IMR-90 (cell line): ENCODE measurements at regions of chr17 and their contacts with region 1.

Region 1: DNA sequence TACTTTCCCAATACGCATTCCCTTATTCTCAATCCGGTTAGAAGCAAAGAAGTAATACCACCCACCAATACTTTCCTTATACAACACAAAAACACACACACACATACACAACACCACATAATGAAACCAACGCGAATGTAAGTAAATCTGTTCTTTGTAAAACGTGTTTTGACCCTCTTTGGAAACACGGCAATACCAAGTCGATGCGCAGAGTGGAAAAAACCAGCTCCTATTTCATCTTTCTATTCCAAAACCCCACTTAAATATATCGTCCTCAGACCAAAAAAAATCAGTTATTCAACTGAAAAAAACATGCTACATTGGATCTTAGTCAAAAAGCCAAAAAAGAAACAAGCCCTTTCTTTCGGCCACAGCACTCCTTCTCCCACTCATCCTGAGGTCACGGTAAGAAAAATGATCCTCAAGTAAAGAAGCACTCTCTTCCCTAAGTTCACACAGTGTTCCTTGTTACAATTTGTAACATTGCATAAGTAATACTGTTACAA is 31.0 kb upstream of the ARL4D start:
- DNase-seq: peak; percentile 97
- ATAC-seq: peak; percentile 59
- H3K4me3 ChIP-seq: peak overlapping the region; percentile 35; the same call in 1 of the 2 replicates
- H3K27ac ChIP-seq: peak overlapping the region; percentile 79
- H3K4me1 ChIP-seq: peaks cover 14% of the 10 kb centered on the region
- H3K27me3 ChIP-seq: no peaks in the 10 kb centered on the region
- CTCF ChIP-seq: no peak
- POLR2A ChIP-seq: peak; percentile 100
- RAD21 ChIP-seq: no peak

Region 2: GRCh38 chr17:43388359-43389045 is 20.7 kb after region 1 on chr17:
- CTCF ChIA-PET with region 1: no interaction called
- POLR2A ChIA-PET with region 1: interaction called, 34 read pairs
- dilution Hi-C with region 1: no loop called
- in situ Hi-C with region 1: no loop called
- intact Hi-C with region 1: loop called (anchors 1 kb)
- DNase-seq: peak; percentile 92
- ATAC-seq: peak; percentile 89
- H3K4me3 ChIP-seq: peak overlapping the region; percentile 60
- H3K27ac ChIP-seq: peak overlapping the region; percentile 97
- H3K4me1 ChIP-seq: no peaks in the 10 kb centered on the region
- H3K27me3 ChIP-seq: no peaks in the 10 kb centered on the region; the same call in 1 of the 2 replicates
- CTCF ChIP-seq: no peak
- POLR2A ChIP-seq: peak; percentile 95
- RAD21 ChIP-seq: no peak

Region 3: GRCh38 chr17:43393944-43394482 is 26.2 kb after region 1 on chr17:
- CTCF ChIA-PET with region 1: no interaction called
- POLR2A ChIA-PET with region 1: interaction called, 11 read pairs
- dilution Hi-C with region 1: no loop called
- in situ Hi-C with region 1: no loop called
- intact Hi-C with region 1: no loop called
- DNase-seq: peak; percentile 83
- ATAC-seq: peak; percentile 47
- H3K4me3 ChIP-seq: no peak overlapping the region
- H3K27ac ChIP-seq: peak overlapping the region; percentile 52
- H3K4me1 ChIP-seq: peaks cover 5% of the 10 kb centered on the region
- H3K27me3 ChIP-seq: no peaks in the 10 kb centered on the region
- CTCF ChIP-seq: peak; percentile 97
- POLR2A ChIP-seq: 0 out of 2 replicates have a peak, but pooled peaks have one; percentile 47
- RAD21 ChIP-seq: peak; percentile 99